ENCODE measurements at regions of chr11 and their contacts with region 1.

Region 1: DNA sequence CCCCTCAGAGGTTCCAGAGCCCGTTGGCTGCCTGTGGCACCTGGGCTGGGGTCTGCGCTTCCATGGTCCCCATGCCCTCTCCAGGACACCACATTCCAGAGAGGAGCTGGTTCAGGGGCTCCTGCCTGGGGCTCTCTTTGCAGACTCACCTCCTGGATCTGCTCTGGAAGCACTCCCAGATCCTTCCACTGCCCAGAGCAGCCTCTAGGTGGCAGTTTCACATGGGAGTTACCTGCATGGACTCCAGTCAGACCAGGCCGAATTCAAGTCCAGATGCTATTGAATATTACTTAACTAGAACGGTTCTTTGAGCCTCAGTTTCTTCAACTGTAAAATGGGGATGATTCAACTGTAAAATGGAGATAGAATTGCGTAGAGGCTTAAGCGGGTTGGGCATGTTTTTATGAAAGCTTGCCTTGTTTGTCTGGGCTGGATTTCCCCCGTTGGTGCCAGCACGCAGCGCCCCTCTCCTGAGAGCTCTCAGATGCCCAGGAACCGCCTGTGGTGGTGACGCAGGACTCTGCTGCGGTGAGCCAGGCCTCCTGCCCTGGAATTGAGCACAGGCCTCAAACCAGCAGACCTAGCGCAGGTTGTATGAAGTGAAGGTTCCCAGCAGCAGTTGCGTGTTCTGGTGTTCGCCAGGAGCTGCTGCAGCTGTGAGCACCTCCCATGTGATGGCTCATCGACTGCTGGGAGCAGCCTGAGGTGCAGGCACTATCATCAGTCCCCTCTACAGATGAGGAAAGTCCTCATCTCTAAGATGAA is 44.2 kb downstream of the LMO1 start:
- DNase-seq: peak in 2 of 3 donors; percentile 50 to 60
- H3K4me3 ChIP-seq: no peak overlapping the region
- H3K27ac ChIP-seq: no peak overlapping the region
- H3K4me1 ChIP-seq: peaks cover 0 to 21% (median 14%) of the 10 kb centered on the region in 4 experiments
- H3K27me3 ChIP-seq: peaks cover 0 to 20% (median 2%) of the 10 kb centered on the region in 5 experiments

Region 2: GRCh38 chr11:8177136-8177535 is 42.3 kb before region 1 on chr11:
- CTCF ChIA-PET with region 1: no interaction called
- POLR2A ChIA-PET with region 1: no interaction called
- DNase-seq: no peak
- H3K4me3 ChIP-seq: no peak overlapping the region
- H3K27ac ChIP-seq: no peak overlapping the region
- H3K4me1 ChIP-seq: no peaks in the 10 kb centered on the region
- H3K27me3 ChIP-seq: peaks cover 0 to 31% (median 11%) of the 10 kb centered on the region in 5 experiments

Region 3: GRCh38 chr11:8201644-8202365 is 17.6 kb before region 1 on chr11:
- CTCF ChIA-PET with region 1: interaction called, 15 read pairs
- POLR2A ChIA-PET with region 1: no interaction called
- DNase-seq: peak; percentile 61 to 90 (median 90)
- H3K4me3 ChIP-seq: peak overlapping the region in 1 of 7 experiments; percentile 9
- H3K27ac ChIP-seq: peak overlapping the region in 1 of 2 experiments; percentile 25
- H3K4me1 ChIP-seq: peaks cover 14 to 65% (median 53%) of the 10 kb centered on the region in 4 experiments
- H3K27me3 ChIP-seq: no peaks in the 10 kb centered on the region

Region 4: DNA sequence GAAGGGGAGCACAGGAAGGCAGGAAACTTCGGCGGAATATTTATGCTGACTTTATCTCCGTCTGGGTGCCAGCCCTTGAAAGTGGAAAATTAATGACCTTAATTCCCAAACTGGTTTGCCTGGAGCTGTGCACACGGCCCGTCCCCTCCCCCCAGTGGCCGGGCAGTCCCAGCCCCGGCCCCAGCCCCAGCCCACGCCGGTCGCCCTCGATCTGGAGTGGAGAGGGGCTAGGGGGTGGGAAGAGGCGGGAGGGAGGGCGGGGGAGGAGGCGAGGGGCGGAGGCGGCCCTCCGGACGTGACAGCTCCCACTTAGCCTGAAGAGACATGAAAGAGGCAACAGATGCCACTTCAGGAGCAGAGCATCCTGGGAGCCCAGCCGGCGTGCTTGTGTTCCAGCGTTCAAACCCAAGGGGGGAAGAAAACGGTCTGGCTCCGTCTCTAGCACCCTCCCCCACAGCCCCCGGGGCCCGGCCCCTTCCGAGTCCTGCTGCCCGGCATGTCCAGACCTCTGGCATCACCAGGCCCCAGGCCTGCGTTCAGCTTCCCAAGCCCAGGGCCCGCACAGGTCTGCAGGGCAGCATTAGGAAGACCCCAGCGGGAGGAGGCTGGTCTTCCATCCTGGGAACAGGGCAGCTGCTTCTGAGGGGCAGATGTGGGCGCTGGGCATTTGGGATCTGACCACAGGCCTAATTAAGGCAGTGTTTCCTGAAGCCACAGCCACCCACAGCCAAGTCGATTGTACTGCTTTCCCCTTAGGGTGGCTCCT is 64.2 kb after region 1 on chr11:
- CTCF ChIA-PET with region 1: no interaction called
- POLR2A ChIA-PET with region 1: no interaction called
- DNase-seq: peak in 2 of 3 donors; percentile 28 to 32
- H3K4me3 ChIP-seq: peak overlapping the region in 5 of 7 experiments; percentile 8 to 52 (median 36)
- H3K27ac ChIP-seq: no peak overlapping the region
- H3K4me1 ChIP-seq: peaks cover 0 to 12% (median 4%) of the 10 kb centered on the region in 4 experiments
- H3K27me3 ChIP-seq: peaks cover 0 to 5% (median 0%) of the 10 kb centered on the region in 5 experiments

Measured in common myeloid progenitor, CD34-positive (primary cell).